ENCODE measurements at regions of chr6 and their contacts with region 1.

Region 1: DNA sequence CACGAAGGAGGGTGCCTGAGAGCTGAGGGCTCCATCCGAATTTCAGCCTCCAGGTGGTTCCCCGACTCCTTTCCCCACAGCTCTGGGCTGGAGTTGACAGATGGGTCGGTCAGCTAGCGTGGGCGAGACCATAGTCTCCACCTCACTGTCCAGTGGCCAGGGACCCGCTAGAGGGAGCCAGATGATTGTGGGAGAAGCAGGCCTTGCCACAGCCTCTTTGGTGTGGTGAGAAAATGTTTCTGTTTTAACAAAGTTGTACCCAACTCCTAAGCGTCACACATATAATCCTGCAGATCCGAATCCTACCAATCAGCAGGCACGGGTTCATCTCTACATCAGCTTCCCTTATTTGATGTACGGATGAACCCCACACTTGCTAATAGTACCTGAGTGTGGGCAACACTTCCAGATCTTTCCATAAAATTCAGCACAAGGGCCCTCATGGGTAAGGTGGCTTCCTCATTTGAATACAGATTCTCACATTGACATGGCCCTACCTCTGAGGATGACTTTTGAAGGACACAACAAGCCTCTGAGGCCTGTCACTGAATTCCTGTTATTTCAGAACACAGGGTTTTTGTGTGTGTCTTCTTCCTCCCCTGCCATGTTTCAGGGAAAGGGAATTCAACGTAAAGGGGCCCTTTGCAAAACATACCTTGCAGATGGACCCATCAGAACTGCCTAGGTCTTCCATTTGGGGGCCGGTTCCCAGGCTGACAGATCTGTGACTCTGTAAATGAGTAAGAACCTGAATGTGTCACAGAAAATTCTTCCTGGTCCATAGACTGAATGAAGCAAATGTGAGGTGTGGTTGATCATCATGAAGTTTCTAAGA is 103.2 kb upstream of the DUSP22 start:
- DNase-seq: peak; percentile 74
- H3K4me3 ChIP-seq: no peak overlapping the region
- H3K27ac ChIP-seq: no peak overlapping the region
- H3K4me1 ChIP-seq: no peaks in the 10 kb centered on the region
- H3K27me3 ChIP-seq: no peaks in the 10 kb centered on the region
- CTCF ChIP-seq: peak; percentile 75 to 97

Region 2: DNA sequence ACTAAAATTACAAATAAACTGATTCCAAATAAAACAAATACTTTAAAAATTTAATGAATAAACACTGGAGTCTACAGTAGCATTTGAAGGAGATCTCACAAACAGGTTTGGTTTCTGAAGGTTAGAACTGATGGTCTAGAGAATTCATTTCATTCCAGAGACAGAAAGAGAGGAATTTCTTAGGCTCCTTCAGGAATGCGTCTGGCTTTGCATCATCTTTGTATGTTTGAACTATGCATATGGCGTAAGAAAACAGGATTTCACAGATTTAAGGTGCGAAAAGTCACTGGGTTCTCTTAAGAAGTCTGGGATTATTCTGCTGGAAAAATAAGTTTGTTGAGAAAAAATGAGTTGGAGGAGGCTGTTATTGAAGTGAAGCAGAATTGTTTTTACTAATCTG is 36.6 kb before region 1 on chr6:
- CTCF ChIA-PET with region 1: no interaction called
- dilution Hi-C with region 1: no loop called
- in situ Hi-C with region 1: no loop called
- intact Hi-C with region 1: no loop called
- DNase-seq: no peak
- H3K4me3 ChIP-seq: no peak overlapping the region
- H3K27ac ChIP-seq: no peak overlapping the region
- H3K4me1 ChIP-seq: peaks cover 35% of the 10 kb centered on the region
- H3K27me3 ChIP-seq: no peaks in the 10 kb centered on the region
- CTCF ChIP-seq: no peak

Region 3: GRCh38 chr6:328136-328670 is 139.2 kb after region 1 on chr6:
- CTCF ChIA-PET with region 1: interaction called, 4 read pairs
- dilution Hi-C with region 1: no loop called
- in situ Hi-C with region 1: no loop called
- intact Hi-C with region 1: loop called (anchors 1 kb)
- DNase-seq: peak; percentile 84
- H3K4me3 ChIP-seq: no peak overlapping the region
- H3K27ac ChIP-seq: no peak overlapping the region
- H3K4me1 ChIP-seq: peaks cover 9% of the 10 kb centered on the region
- H3K27me3 ChIP-seq: no peaks in the 10 kb centered on the region
- CTCF ChIP-seq: no peak

Region 4: DNA sequence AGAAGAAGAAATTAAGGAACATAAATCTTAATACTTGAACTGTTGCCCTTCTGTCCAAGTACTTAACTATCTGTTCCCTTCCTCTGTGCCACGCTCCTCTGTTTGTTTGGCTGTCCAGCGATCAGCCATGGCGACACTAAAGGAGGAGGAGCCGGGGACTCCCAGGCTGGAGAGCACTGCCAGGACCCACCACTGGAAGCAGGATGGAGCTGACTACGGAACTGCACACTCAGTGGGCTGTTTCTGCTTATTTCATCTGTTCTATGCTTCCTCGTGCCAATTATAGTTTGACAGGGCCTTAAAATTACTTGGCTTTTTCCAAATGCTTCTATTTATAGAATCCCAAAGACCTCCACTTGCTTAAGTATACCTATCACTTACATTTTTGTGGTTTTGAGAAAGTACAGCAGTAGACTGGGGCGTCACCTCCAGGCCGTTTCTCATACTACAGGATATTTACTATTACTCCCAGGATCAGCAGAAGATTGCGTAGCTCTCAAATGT is 219.6 kb after region 1 on chr6:
- CTCF ChIA-PET with region 1: no interaction called
- dilution Hi-C with region 1: no loop called
- in situ Hi-C with region 1: no loop called
- intact Hi-C with region 1: loop called (anchors 5 kb)
- DNase-seq: no peak
- H3K4me3 ChIP-seq: no peak overlapping the region
- H3K27ac ChIP-seq: no peak overlapping the region
- H3K4me1 ChIP-seq: no peaks in the 10 kb centered on the region
- H3K27me3 ChIP-seq: peaks cover 3% of the 10 kb centered on the region
- CTCF ChIP-seq: peak; percentile 8 to 40

Region 5: DNA sequence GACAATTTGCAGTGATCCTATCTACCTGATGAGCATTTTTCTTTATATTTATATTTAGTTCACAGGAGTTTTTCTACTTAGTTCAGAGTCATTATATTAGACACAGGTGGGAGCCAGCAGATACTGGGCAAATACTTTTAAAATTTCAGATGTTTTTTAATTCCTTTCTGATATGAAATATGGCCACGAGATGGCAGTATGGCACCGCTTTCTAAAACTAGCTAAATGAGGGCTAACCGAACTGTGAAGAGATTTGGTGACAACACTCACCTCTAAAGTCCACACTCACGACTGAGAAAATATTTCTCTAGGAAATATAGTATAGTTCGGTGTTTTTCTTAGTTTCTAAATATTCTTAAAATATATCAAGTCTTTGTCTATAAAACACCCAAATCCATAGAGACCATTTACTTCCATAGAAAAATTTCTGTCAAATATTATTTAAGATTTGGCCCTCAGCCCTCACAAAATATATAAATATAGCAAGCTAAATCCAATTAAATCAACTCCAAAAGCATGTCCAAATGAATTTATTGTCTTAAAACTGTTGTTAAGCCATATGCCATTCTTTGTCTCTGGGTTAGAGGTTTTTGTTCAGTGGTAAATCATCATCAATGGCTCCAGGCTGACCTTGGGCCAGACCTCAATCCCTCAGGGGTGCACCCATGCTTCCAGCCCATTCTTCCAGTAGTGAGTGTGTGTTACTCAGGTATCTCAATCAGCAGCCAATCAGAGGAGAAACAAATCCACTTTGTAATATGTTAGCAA is 404.3 kb after region 1 on chr6:
- CTCF ChIA-PET with region 1: no interaction called
- dilution Hi-C with region 1: no loop called
- in situ Hi-C with region 1: no loop called
- intact Hi-C with region 1: loop called (anchors 2 kb)
- DNase-seq: peak; percentile 26
- H3K4me3 ChIP-seq: no peak overlapping the region
- H3K27ac ChIP-seq: no peak overlapping the region
- H3K4me1 ChIP-seq: no peaks in the 10 kb centered on the region
- H3K27me3 ChIP-seq: no peaks in the 10 kb centered on the region
- CTCF ChIP-seq: peak; percentile 51 to 65

Region 6: DNA sequence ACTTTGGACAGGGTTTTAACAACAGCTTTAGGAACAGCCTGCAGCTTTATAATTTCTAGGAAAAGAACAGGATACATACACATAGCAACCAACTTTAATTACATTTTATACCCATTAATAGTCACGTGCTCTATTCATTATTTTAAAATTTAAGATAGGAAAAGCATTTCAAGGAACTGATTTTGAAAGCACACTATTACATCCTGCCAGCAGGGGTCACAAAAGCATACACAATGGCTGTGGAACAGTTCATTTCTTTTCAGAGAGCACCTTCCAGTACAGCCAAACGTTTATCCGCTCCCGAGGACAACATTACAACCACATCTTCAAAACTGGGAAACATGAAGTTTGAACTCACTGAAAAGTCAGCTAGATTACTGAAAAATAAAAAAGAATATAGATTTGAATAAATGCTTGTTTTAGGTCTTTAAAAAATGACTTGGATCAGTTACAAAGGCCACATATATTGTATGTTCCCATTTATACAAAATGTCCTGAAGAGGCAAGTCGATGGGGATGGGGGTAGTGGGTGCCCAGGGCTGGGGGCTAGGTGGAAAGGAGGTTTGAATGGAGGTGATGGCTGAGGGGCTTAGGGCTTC is 608.5 kb after region 1 on chr6:
- CTCF ChIA-PET with region 1: no interaction called
- dilution Hi-C with region 1: no loop called
- in situ Hi-C with region 1: no loop called
- intact Hi-C with region 1: loop called (anchors 1 kb)
- DNase-seq: peak; percentile 40
- H3K4me3 ChIP-seq: no peak overlapping the region
- H3K27ac ChIP-seq: no peak overlapping the region
- H3K4me1 ChIP-seq: no peaks in the 10 kb centered on the region
- H3K27me3 ChIP-seq: peaks cover 7% of the 10 kb centered on the region
- CTCF ChIP-seq: peak; percentile 62 to 76

Region 7: GRCh38 chr6:1436334-1437306 is 1247.6 kb after region 1 on chr6:
- CTCF ChIA-PET with region 1: no interaction called
- dilution Hi-C with region 1: no loop called
- in situ Hi-C with region 1: no loop called
- intact Hi-C with region 1: loop called (anchors 1 kb)
- DNase-seq: peak; percentile 62
- H3K4me3 ChIP-seq: no peak overlapping the region
- H3K27ac ChIP-seq: no peak overlapping the region
- H3K4me1 ChIP-seq: peaks cover 6% of the 10 kb centered on the region
- H3K27me3 ChIP-seq: no peaks in the 10 kb centered on the region
- CTCF ChIP-seq: peak; percentile 72